GM10248 (cell line): ENCODE measurements at regions of chr5 and their contacts with region 1.

Region 1: DNA sequence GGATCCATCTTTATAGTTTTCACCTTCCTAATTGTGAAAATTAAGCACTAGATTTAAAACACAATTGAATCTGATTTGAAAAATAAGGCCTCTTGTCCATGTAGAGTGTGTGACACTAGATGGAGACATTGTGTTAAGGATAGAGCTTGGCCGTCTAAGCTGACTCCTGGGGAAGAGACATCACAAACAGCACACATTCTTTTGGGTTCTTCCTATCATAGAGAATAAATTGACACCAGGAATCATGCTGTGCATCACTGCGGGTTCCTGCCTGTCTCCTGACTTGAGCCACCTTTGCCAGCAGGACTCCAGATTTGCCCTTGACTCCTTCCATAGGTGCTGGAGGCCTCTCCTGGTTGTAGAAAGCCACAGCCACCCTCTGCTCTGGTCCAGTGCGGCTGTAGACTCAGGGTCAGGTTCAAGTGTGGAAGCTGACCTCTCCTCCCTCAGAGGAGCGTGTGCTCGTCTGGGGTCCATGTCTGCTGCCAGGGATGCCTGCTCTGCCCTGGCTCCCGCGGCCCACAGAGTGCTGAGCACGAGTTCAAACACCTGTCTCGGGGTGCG is 11.2 kb downstream of the ROPN1L start:
- DNase-seq: peak; percentile 82
- CTCF ChIP-seq: peak; percentile 78

Region 2: DNA sequence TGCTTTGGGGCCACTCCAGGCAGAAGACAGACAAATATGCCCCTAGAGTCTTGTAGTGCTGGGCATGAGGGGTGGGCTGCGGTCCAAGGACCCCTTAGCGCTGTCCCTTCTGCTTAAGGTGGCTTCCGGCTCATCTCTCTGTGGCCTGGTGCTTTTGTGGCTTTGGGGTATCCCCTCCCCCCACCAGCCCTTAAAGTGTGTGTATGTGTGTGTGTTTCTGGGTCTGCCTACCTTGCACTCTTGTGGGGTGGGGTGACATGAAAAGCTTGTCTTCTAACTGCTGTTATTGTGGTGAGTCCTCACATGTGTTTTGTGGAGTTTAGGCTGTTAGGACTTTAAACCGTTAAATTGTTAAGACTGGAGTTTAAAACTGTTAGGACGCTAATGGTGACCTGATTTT is 75.8 kb before region 1 on chr5:
- CTCF ChIA-PET with region 1: no interaction called
- POLR2A ChIA-PET with region 1: no interaction called
- DNase-seq: no peak
- CTCF ChIP-seq: no peak

Region 3: GRCh38 chr5:10513501-10514442 is 60.9 kb after region 1 on chr5:
- CTCF ChIA-PET with region 1: no interaction called
- POLR2A ChIA-PET with region 1: no interaction called
- DNase-seq: no peak
- CTCF ChIP-seq: no peak

Region 4: DNA sequence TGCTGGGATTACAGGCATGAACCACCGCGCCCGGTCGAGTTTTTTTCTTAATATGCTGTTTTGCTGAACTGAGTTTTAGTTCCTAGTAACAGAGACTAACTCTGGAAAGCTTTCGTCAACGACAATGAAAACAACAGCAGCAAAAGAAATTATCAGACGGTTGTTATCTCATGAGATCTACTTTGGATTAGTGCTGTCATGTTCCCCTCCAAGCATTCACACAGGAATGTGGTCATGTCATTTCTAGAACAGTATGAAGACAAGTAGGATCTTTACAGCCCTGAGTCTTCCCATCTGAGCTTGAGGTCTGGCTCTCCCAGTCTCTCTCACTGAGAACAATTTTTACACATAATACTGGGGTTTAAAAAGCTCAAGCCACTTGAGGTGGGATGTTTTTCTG is 107.0 kb after region 1 on chr5:
- CTCF ChIA-PET with region 1: interaction called, 13 read pairs
- POLR2A ChIA-PET with region 1: no interaction called
- DNase-seq: no peak
- CTCF ChIP-seq: no peak

Region 5: DNA sequence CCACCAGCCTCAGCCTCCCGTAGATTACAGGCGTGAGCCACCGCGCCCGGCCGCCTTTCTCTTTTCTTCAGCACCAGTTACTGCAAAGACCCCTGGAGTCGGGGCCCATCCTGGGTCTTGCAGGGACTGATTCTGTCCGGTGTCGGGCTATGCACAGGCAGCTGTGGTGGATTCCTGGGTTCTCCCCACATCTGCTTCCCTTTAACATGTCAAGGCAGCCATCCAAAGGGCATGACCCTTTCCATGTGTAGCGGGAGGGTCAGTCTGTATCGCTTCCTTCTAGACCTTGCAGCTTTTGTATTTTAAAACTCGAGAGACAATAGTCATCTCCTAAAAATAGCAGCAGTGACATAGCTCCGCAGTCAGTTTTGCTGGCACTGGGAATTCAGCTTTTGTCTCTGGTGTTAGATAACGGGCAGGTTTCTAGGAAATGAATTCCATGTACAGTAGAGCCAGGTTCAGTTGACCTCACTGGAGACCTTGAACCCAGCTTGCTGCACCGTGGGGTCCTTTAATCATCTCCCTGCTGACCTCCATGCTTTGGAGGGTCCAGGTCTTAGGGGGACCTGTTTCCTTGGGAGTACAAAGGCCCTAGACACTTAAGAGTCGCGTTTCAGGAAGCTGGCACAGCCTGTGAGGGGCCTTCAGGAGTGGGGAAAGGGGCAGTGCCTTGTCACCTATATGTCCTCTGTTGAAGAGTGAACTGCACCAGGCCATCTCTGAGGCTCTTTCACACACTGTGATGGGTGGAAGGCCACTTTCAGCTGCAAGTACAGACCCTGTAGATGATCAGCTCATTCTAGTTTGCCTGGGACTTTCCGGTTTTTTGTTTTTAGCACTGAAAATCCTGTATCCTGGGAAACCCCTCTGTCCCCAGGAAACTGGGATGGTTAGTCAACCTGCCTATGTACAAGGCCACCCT is 124.8 kb after region 1 on chr5:
- CTCF ChIA-PET with region 1: interaction called, 11 read pairs
- POLR2A ChIA-PET with region 1: no interaction called
- DNase-seq: no peak
- CTCF ChIP-seq: no peak

Region 6: DNA sequence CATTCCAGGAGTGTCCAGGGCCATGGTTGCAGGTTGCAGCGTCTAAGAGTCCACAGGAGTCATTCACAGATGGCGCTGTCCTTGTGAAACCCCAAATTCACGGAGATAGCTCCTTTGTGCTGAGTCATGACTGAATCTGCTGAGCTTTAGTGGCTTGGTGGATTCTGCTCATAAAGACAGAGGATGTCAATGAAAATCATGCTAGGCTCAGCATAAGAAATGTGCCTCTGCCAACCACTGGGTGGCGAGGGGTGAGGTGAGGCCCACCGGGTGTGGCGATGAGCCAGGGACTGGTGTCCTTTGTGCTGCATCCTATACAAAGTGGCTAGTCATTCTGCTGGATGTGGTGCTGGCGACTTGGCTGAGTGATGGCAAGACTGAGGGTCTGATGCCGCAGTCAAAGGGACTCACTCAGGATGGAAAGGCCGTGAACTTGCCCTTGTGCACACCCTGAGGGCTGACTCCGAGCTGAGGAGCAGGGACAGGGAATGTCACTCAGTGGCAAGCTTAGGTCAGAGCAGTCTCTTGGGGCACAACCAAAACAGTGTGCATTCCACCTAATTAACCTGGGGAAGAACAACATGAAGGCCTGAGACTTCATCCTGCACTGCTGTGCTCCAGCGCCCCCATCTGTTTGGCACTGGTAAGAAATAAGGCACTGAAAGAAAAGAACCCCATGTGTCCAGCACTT is 236.7 kb after region 1 on chr5:
- CTCF ChIA-PET with region 1: interaction called, 65 read pairs
- POLR2A ChIA-PET with region 1: no interaction called
- DNase-seq: no peak
- CTCF ChIP-seq: peak; percentile 26

Region 7: DNA sequence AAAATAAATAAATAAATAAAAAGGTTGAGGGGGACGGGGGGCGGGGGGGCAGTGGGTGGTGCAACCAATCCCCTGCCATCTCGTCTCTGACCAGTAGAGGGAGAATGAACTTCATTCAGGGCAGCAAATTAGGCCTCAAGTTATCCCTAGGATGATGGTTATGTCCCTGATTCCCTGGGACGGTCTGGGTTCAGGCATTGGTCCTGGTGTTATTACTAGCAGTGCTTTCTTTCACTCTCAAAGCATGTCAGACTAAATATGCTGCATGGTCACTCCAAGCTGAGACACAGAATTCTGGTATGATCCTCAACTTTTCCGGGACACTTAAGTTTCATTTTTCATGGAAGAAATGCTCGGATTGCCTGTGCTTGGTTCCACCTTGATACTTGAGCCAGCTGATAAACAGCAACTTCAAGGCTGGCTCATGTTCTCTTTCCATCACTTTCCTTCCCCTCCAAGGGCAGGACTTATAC is 248.8 kb after region 1 on chr5:
- CTCF ChIA-PET with region 1: interaction called, 36 read pairs
- POLR2A ChIA-PET with region 1: no interaction called
- DNase-seq: no peak
- CTCF ChIP-seq: peak; percentile 43